ENCODE measurements at regions of chr12 and their contacts with region 1.

Region 1: DNA sequence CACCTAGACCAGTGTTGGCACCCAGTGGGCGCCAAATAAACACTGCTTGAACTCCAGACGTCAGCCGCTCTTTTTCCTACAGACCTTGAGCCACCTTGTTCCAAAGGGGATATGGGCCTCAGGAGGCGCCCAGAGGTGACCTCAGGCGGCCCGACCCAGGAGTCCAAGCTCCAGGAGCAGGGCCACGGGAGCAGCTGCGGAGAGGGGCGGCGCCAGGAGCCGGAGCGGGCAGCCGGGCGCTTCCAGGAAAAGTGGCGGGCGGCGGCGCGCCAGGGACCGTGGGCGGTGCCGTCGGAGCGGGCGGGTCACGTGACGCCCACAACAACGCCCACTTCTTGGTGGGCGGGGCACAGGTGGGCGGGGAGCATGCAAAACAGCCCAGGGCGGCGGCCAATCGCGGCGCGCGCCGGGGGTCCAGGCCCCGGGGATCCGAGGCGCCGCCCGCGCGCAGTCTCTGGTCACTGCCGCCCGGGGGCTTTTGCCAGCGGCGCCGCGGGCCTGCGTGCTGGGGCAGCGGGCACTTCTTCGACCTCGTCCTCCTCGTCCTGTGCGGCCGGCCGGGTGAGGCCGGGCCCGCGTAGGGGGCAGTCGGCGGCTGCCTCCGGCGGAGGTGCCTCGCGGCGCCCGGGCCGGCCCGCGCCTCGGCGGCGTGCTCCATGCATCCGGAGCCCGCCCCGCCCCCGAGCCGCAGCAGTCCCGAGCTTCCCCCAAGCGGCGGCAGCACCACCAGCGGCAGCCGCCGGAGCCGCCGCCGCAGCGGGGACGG is at the start of gene ORAI1:
- DNase-seq: peak; percentile 97 to 99 (median 98)
- ATAC-seq: peak; percentile 88
- H3K4me3 ChIP-seq: peak within 1 kb of the TSS; percentile 60 to 90
- H3K27ac ChIP-seq: peak within 1 kb of the TSS; percentile 95 to 97
- H3K4me1 ChIP-seq: peaks cover 16 to 57% of the 10 kb centered on the region in 2 donors
- H3K27me3 ChIP-seq: no peaks in the 10 kb centered on the region
- CTCF ChIP-seq: no peak
- polyA plus RNA-seq, gene ORAI1: 8.9 to 15.8 (median 12.1) TPM

Region 2: GRCh38 chr12:121579981-121580868 is 46.0 kb before region 1 on chr12:
- intact Hi-C with region 1: loop called in 1 of 2 experiments (anchors 10 kb)
- DNase-seq: peak; percentile 76 to 92 (median 80)
- ATAC-seq: peak; percentile 67
- H3K4me3 ChIP-seq: peak overlapping the region; percentile 61 to 64
- H3K27ac ChIP-seq: peak overlapping the region; percentile 83 to 86
- H3K4me1 ChIP-seq: peaks cover 26 to 54% of the 10 kb centered on the region in 2 donors
- H3K27me3 ChIP-seq: peaks cover 0 to 8% of the 10 kb centered on the region in 2 donors
- CTCF ChIP-seq: no peak

Region 3: DNA sequence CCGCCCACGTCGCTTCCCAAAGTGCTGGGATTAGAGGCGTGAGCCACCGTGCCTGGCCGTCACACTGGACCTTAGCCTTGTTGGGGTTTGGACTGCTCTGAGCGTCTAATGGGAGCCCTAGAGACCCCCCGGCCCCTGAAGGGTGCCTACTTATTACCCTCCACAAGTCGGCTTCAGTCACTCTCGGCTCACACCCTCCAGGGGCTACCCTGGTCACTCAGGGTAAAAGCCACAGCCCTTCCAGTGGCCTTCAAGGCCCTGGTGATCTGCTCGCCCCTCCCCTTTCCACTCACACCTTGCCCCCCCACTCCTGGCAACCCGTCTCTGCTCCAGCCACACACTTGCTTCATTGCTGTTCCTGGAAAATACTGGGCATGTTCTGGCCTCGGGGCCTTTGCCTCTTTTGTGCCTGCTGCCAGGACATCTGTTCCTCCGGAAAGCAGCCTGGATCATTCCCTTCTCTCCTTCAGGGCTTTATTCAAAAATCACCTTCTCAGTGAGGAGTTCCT is 46.8 kb after region 1 on chr12:
- intact Hi-C with region 1: loop called in 1 of 2 experiments (anchors 10 kb)
- DNase-seq: peak in 1 of 4 donors; percentile 37
- ATAC-seq: peak; percentile 18
- H3K4me3 ChIP-seq: peak overlapping the region; percentile 40 to 51
- H3K27ac ChIP-seq: peak overlapping the region in 1 of 2 donors; percentile 64
- H3K4me1 ChIP-seq: peaks cover 7 to 21% of the 10 kb centered on the region in 2 donors
- H3K27me3 ChIP-seq: no peaks in the 10 kb centered on the region
- CTCF ChIP-seq: no peak

Region 4: DNA sequence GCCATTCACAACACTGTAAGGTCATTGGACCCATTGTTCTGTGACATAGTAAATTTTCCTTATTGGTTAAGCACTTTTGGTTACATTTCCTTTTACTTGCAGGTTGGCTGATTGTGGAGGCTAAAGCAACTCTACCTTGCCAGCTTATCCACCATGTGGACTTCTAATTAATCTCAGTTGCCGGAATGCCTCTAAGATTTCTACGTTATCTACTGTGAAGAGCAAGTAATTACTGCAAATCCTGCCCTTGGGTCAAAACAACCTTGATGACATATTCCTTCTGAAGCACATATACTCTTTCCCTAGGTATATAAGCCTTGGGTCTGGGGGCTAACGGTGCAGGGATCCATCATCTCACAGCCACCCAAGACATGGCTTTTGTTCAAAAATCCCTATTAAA is 62.7 kb after region 1 on chr12:
- intact Hi-C with region 1: no loop called
- DNase-seq: no peak
- ATAC-seq: no peak
- H3K4me3 ChIP-seq: no peak overlapping the region
- H3K27ac ChIP-seq: no peak overlapping the region
- H3K4me1 ChIP-seq: peaks cover 0 to 12% of the 10 kb centered on the region in 2 donors
- H3K27me3 ChIP-seq: no peaks in the 10 kb centered on the region
- CTCF ChIP-seq: no peak

Region 5: GRCh38 chr12:121712461-121713256 is 86.4 kb after region 1 on chr12 and contains the start of gene TMEM120B:
- intact Hi-C with region 1: no loop called
- DNase-seq: peak; percentile 86 to 96 (median 86)
- ATAC-seq: peak; percentile 89
- H3K4me3 ChIP-seq: peak within 1 kb of the TSS; percentile 88 to 89
- H3K27ac ChIP-seq: peak within 1 kb of the TSS; percentile 89
- H3K4me1 ChIP-seq: peaks cover 8 to 29% of the 10 kb centered on the region in 2 donors
- H3K27me3 ChIP-seq: no peaks in the 10 kb centered on the region
- CTCF ChIP-seq: no peak
- polyA plus RNA-seq, gene TMEM120B: 8.5 to 14.1 (median 10.4) TPM

Region 6: DNA sequence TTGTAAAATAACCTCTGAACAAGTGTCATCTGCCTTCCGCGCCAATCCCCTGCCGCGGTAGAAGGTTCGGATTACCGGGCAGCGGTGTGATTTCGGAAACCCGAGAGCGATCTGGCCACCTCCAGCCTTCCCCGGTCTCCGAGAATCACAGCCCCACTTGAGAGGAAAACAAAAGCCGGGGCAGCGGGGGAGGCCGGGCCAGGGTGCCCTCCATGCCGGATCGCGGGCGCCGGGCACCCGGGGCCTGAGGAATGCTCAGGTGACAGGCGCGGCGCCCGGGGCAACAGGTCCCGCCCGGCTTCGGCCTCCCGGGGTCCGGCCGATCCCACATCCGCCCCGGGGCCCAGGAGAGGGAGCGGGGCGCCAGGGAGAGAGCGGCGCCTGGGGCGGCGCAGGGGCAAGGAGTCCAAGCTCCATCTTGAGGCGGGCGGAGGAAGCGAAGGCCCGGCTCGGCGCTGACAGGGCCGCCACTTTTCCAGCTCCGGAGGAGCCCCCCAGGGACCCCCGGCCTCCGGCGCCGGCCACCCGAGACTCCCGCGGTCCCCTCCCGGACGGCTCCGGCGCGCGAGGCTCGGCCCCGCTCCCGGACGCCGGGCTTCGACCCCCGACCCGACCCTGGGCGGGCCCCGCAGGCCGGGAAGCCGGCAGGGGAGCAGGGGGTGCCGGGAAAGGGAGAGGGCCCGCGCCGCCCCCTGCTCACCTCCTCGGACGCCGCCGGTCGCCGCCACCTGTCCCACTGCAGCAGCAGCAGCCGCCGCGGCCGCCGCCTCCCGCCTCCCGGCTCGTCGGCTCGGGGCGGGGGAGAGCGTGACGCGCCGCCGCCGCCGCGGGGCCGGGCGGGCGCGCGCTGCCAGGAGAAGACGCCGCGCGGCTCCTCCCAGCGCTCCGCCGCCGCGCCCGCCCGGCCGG is 795.8 kb after region 1 on chr12 and contains the start of gene CLIP1:
- intact Hi-C with region 1: no loop called
- DNase-seq: peak; percentile 54 to 92 (median 66)
- ATAC-seq: peak; percentile 80
- H3K4me3 ChIP-seq: peak within 1 kb of the TSS; percentile 74 to 90
- H3K27ac ChIP-seq: peak within 1 kb of the TSS; percentile 98 to 99
- H3K4me1 ChIP-seq: peaks cover 17 to 50% of the 10 kb centered on the region in 2 donors
- H3K27me3 ChIP-seq: no peaks in the 10 kb centered on the region
- CTCF ChIP-seq: peak; percentile 18 to 25
- polyA plus RNA-seq, gene CLIP1: 31.2 to 34.2 (median 32.7) TPM